ENCODE measurements at regions of chr15 and their contacts with region 1.

Region 1: GRCh38 chr15:74202452-74203428 is at the start of gene STRA6:
- DNase-seq: no peak
- ATAC-seq: no peak; the same call in 1 of the 2 replicates
- H3K4me3 ChIP-seq: no peak within 1 kb of the TSS
- H3K27ac ChIP-seq: no peak within 1 kb of the TSS
- H3K4me1 ChIP-seq: peaks cover 25 to 49% of the 10 kb centered on the region in 2 experiments
- H3K27me3 ChIP-seq: peaks cover 16% of the 10 kb centered on the region; the same call in 1 of the 2 replicates
- CTCF ChIP-seq: no peak
- POLR2A ChIP-seq: peak; percentile 26
- RAD21 ChIP-seq: no peak
- total RNA-seq, gene STRA6: 0.54 TPM

Region 2: DNA sequence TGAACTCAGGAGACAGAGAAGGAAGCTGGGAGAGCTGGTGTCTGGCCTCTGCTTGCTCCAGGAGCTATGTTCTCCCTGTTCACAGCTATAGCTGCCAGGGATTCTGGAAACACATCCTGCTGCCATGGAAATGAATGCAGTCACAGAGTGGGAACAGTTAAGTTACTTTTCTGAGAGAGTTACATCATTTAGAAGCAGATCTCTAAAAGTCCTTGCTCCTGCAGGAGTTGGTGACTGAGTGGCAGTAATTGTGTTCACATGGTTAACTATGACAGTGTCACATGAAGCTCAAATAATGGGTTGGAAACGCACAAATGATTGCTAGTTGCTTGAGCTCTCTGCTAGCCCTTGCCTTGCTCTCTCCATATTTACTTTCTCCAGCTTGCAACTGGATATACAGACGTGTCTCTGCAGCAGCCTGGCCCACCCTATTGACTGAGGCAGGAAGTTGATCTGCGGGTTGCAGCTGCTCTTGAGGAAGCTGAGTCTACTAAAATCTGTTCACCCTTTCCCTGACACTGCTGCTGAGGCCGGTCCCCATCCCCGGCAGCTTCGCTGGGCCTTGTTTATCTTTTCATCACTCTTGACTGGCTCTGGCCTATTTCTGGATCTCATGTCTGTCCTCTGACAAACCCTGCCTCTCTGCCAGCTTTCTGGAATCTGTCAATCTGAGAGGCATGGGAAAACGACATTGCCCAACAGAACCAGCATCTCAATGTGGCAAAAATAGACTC is 45.9 kb before region 1 on chr15:
- CTCF ChIA-PET with region 1: no interaction called
- POLR2A ChIA-PET with region 1: no interaction called
- RAD21 ChIA-PET with region 1: no interaction called
- intact Hi-C with region 1: loop called (anchors 5 kb)
- DNase-seq: no peak
- ATAC-seq: no peak
- H3K4me3 ChIP-seq: no peak overlapping the region
- H3K27ac ChIP-seq: no peak overlapping the region
- H3K4me1 ChIP-seq: no peaks in the 10 kb centered on the region
- H3K27me3 ChIP-seq: no peaks in the 10 kb centered on the region
- CTCF ChIP-seq: no peak
- POLR2A ChIP-seq: no peak
- RAD21 ChIP-seq: no peak

Region 3: DNA sequence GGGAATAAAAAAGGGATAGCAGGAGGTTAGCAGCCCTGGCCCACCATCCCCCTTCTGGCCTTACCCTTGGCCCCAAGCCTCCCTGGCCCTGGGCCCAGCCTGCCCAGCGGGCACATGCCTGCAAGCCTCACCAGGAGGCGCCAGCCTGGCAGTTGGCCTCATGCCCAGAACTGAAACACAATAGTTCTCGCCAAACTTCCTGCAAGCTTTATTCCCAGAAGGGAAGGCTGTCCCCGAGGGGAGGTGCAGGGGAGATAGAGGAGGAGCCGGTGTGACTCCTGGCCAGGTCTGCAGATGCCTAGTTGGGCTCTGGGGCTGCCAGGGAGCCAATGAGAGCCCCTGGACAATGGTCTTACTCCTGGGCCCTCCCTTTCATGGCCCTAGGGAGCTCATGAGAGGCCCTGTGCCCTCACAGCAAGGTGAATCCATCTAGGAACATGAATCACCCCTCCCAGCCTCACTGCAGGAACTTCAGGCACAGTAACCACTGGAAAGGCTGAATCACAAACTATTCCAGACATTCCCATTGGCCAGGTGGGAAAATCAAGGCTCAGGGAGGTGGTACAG is 37.3 kb after region 1 on chr15:
- CTCF ChIA-PET with region 1: no interaction called
- POLR2A ChIA-PET with region 1: no interaction called
- RAD21 ChIA-PET with region 1: no interaction called
- intact Hi-C with region 1: loop called (anchors 2 kb)
- DNase-seq: peak; percentile 88
- ATAC-seq: peak; percentile 96
- H3K4me3 ChIP-seq: 0 out of 4 replicates have a peak overlapping the region, but pooled peaks of 1 of the 2 experiments have one; percentile 9
- H3K27ac ChIP-seq: peak overlapping the region; percentile 64
- H3K4me1 ChIP-seq: peaks cover 38 to 46% of the 10 kb centered on the region in 2 experiments
- H3K27me3 ChIP-seq: no peaks in the 10 kb centered on the region
- CTCF ChIP-seq: peak; percentile 34 to 76 (median 63); a peak in 5 of 6 replicates
- POLR2A ChIP-seq: no peak
- RAD21 ChIP-seq: peak; percentile 52; the same call in 1 of the 2 replicates